Esophagus squamous epithelium (tissue), 5 donors: ENCODE measurements at regions of chr2 and their contacts with region 1.

Region 1: DNA sequence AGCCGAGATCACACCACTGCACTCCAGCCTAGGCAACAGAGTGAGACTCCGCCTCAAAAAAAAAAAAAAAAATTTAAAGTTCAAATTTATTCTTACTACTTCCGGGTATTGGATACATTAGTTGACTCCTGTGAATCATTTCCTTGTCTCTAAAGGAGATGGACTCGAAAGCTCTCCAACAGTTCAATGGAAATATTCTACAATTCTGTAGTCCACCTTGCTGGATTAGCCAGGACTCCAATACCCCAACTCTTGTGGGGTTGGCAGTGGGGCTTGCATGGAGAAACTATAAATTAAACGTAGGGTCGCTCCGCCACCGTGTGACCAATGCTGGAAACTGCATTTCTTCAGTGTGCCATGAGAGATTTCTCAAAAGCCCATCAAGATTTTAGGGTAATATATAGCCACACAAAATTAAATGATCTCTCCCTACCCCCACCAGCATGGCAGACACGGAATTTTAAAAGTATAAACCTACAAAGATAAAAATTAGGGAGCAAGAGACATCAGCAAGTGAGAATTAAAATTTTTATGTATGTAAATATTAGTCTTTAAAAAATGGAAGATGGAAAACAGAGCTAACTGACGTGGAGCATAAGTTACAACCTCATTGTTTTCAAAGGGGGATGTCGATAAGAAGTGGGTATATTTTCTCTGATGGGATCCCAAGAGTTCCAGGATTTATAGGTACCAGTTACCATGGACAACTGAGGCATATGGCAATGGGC is 27.8 kb upstream of the GAREM2 start:
- DNase-seq: no peak
- H3K4me3 ChIP-seq: peak overlapping the region in 1 of 4 donors; percentile 36
- H3K27ac ChIP-seq: no peak overlapping the region
- H3K4me1 ChIP-seq: peaks cover 4 to 16% (median 4%) of the 10 kb centered on the region in 3 donors
- H3K27me3 ChIP-seq: peaks cover 0 to 6% (median 0%) of the 10 kb centered on the region in 4 donors
- CTCF ChIP-seq: peak; percentile 69 to 80 (median 78)
- POLR2A ChIP-seq: no peak

Region 2: DNA sequence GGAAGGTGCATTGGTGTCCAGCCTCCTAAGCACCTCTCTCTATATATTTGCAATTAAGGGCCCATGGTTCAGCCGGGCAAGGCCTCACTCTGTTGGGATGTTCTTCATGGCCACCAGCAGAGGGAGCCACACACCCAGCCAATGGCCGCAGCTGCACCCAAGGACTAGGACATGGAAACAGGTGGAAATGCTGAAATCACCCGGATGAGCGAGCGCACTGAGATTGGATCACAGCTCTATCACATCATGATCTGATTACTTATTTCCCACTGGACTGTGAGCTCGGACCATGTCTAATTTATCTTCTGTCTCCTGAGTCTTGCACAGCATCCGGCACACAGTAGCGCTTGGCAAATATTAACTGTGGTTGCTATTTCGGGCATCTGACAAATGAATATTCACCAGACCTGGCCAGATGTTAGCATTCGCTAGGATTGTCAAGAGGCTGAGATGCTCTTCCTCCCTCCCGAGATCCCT is 194.0 kb before region 1 on chr2:
- intact Hi-C with region 1: loop called (anchors 10 kb)
- DNase-seq: peak; percentile 11
- H3K4me3 ChIP-seq: no peak overlapping the region
- H3K27ac ChIP-seq: no peak overlapping the region
- H3K4me1 ChIP-seq: no peaks in the 10 kb centered on the region
- H3K27me3 ChIP-seq: no peaks in the 10 kb centered on the region
- CTCF ChIP-seq: peak; percentile 75 to 94 (median 91)
- POLR2A ChIP-seq: no peak

Region 3: DNA sequence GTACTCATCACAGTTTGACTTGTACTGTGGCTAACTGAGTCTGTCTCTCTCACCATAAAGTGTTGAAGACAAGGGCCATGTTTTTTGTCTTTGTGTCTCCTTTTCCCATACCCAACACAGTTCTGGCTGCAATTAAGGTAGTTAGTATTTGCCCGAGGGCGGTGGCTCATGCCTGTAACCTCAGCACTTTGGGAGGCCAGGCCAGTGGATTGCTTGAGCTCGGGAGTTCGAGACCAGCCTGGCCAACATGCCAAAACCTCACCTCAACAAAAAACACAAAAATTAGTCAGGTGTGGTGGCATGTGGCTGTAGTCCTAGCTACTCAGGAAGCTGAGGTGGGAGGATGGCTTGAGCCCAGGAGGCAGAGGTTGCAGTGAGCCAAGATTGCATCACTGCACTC is 156.0 kb before region 1 on chr2:
- intact Hi-C with region 1: loop called (anchors 5 kb)
- DNase-seq: no peak
- H3K4me3 ChIP-seq: no peak overlapping the region
- H3K27ac ChIP-seq: no peak overlapping the region
- H3K4me1 ChIP-seq: peaks cover 0 to 20% (median 5%) of the 10 kb centered on the region in 3 donors
- H3K27me3 ChIP-seq: no peaks in the 10 kb centered on the region
- CTCF ChIP-seq: no peak
- POLR2A ChIP-seq: no peak